ENCODE measurements at regions of chr6 and their contacts with region 1.

Region 1: DNA sequence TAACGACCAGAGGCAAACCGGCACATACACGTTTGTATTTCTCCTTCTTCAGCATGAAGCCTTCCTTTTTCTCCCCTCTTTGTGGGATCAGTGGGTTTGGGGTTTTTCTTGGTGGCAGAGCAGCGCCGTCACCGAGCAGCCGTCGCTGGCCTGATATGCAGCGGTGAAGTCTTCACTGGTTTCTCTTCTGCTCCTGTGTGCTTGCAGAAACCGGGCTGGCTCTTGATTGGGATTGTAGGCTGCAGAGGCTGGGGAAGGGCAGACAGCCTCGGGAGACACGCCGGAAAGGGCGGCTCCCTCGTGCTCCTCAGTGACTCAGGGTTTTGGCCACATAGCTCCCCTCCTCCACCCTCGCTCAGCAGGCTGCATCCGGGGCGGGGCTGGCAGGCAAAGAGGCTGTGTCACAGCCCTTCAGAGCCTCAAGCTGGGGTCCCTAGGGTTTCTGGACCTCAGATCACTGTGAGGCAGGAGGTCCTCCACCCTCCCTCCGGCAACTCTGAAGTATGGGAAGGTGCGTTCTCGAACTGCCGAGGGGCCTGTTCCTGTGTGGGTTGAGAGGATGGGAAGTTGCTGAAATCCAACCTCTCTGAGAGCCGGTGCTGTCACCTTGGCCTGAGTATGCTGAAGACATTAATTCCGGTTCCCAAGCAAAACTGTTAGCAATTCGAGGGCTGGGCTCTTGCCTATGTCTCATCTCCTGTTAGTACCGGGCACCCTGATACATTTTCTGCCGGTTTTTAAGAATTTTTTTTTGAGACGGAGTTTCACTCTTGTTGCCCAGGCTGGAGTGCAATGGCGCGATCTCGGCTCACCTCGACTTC is 24.2 kb downstream of the NQO2 start:
- DNase-seq: peak; percentile 82
- ATAC-seq: peak; percentile 79
- H3K4me3 ChIP-seq: peak overlapping the region; percentile 45 to 88 (median 63)
- H3K4me3 Mint-ChIP-seq: peak overlapping the region; percentile 91
- H3K27ac ChIP-seq: peak overlapping the region; percentile 38 to 50
- H3K27ac Mint-ChIP-seq: peak overlapping the region; percentile 74
- H3K4me1 ChIP-seq: peaks cover 59 to 63% of the 10 kb centered on the region in 2 donors
- H3K4me1 Mint-ChIP-seq: peaks cover 50% of the 10 kb centered on the region
- H3K27me3 ChIP-seq: peaks cover 0 to 4% (median 0%) of the 10 kb centered on the region in 4 experiments
- H3K27me3 Mint-ChIP-seq: peaks cover 5% of the 10 kb centered on the region
- CTCF ChIP-seq: no peak

Region 2: DNA sequence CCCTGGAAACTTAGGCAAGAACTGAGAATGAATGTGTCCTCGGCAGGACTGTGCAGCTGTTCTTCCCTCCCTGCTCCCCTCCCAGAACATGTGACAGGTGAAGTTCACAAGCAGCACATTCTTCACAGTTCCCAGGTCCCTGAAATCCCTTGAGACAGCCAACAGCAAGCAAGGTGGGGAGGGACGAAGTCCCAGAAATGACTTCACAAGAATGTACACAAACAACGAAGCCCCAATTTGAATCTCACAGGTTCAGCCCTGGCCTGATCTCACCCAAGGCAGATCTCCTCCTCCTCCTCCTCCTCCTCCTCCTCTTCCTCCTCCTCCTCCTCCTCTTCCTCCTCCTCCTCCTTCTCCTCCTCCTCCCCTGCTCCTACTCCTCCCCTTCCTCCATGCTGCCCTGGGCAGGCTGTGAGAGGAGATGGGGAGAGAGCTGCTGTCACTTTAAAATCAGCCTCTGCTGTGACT is 226.3 kb before region 1 on chr6:
- CTCF ChIA-PET with region 1: no interaction called
- POLR2A ChIA-PET with region 1: interaction called, 11 read pairs
- intact Hi-C with region 1: no loop called
- DNase-seq: no peak
- ATAC-seq: no peak
- H3K4me3 ChIP-seq: no peak overlapping the region
- H3K4me3 Mint-ChIP-seq: no peak overlapping the region
- H3K27ac ChIP-seq: no peak overlapping the region
- H3K27ac Mint-ChIP-seq: no peak overlapping the region
- H3K4me1 ChIP-seq: peaks cover 15 to 23% of the 10 kb centered on the region in 2 donors
- H3K4me1 Mint-ChIP-seq: peaks cover 25% of the 10 kb centered on the region
- H3K27me3 ChIP-seq: no peaks in the 10 kb centered on the region
- H3K27me3 Mint-ChIP-seq: no peaks in the 10 kb centered on the region
- CTCF ChIP-seq: no peak

Region 3: GRCh38 chr6:2999618-3000557 is 24.0 kb before region 1 on chr6 and contains the start of gene NQO2:
- CTCF ChIA-PET with region 1: interaction called, 63 read pairs
- POLR2A ChIA-PET with region 1: interaction called, 4 read pairs
- intact Hi-C with region 1: loop called (anchors 1 kb)
- DNase-seq: peak; percentile 92
- ATAC-seq: peak; percentile 88
- H3K4me3 ChIP-seq: peak within 1 kb of the TSS; percentile 65 to 91 (median 85)
- H3K4me3 Mint-ChIP-seq: peak within 1 kb of the TSS; percentile 96
- H3K27ac ChIP-seq: peak within 1 kb of the TSS; percentile 65 to 71
- H3K27ac Mint-ChIP-seq: peak within 1 kb of the TSS; percentile 89
- H3K4me1 ChIP-seq: peaks cover 11 to 21% of the 10 kb centered on the region in 2 donors
- H3K4me1 Mint-ChIP-seq: peaks cover 20% of the 10 kb centered on the region
- H3K27me3 ChIP-seq: no peaks in the 10 kb centered on the region
- H3K27me3 Mint-ChIP-seq: no peaks in the 10 kb centered on the region
- CTCF ChIP-seq: no peak
- total RNA-seq, gene NQO2: 17.9 and 21.5 TPM in 2 replicates

Region 4: DNA sequence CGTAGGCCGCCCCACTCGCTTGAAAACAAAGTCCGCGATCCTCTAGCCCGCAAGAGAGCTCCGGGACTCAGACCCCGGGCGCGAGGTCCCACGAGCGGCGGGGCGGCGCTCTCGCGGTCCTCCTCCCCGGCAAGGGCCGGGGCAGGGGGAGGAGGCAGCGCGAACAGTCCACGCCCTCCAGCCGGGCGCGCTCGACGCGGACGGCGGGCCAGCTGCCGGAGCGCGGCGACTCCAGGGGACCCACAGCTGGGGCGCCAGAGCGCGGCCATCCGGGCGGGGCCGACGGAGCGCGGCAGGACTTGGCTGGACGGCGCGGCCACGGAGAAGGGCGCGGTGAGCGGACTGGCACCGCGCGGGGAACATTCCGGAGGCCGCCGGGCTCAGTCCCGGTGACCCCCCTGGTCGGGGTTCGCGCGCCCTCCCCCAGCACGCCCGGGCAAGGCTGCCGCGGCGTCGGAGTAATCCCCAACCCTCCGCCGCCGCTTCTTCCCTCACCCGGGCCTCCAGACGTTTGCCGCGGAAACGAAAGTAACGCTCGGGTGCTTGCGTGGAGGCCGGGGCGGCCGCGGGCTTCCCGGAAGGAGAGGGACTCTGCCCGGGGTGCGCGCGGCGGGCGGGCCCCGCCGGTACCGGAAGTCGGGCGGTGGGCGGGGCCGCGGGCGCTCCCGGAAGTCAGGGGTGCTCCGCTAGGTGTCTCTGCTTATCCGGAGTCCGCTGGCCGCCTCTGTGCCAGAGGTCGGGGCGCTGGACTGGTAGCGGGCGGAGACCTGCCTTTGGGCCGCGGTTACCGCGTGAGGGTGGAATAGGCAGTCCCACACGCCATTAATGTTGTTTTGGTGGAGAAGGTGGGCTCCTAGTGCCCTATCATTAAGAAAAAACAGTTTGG is 44.7 kb after region 1 on chr6 and contains the start of gene RIPK1:
- CTCF ChIA-PET with region 1: interaction called, 11 read pairs
- POLR2A ChIA-PET with region 1: interaction called, 10 read pairs
- intact Hi-C with region 1: loop called (anchors 1 kb)
- DNase-seq: peak; percentile 95
- ATAC-seq: peak; percentile 73
- H3K4me3 ChIP-seq: peak within 1 kb of the TSS; percentile 55 to 87 (median 85)
- H3K4me3 Mint-ChIP-seq: peak within 1 kb of the TSS; percentile 98
- H3K27ac ChIP-seq: peak within 1 kb of the TSS; percentile 92 to 99
- H3K27ac Mint-ChIP-seq: peak within 1 kb of the TSS; percentile 99
- H3K4me1 ChIP-seq: peaks cover 17 to 23% of the 10 kb centered on the region in 2 donors
- H3K4me1 Mint-ChIP-seq: peaks cover 43% of the 10 kb centered on the region
- H3K27me3 ChIP-seq: no peaks in the 10 kb centered on the region
- H3K27me3 Mint-ChIP-seq: no peaks in the 10 kb centered on the region
- CTCF ChIP-seq: no peak
- total RNA-seq, gene RIPK1: 26.2 and 28.1 TPM in 2 replicates

Region 5: DNA sequence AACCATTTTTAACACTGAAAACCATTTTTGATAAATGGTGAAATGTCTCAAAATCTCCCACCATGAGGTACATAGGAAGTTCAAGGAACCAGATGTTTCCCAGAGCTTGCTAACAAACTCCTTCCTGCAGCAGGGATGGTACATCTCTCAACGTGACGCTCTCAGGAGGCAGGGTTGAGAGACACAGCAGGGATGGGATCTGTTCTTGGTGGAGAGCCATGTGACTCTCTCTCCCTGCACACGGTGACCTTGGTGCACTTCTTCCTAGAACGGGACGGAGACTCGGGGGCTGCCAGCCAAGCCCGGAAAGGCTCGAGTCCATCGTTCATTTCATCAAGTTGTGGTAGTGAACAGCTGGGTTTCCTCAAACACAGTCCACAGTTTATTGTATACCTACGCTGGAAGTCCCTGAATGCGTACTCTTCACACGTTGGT is 919.5 kb after region 1 on chr6:
- CTCF ChIA-PET with region 1: no interaction called
- POLR2A ChIA-PET with region 1: no interaction called
- intact Hi-C with region 1: no loop called
- DNase-seq: no peak
- ATAC-seq: no peak
- H3K4me3 ChIP-seq: no peak overlapping the region
- H3K4me3 Mint-ChIP-seq: no peak overlapping the region
- H3K27ac ChIP-seq: no peak overlapping the region
- H3K27ac Mint-ChIP-seq: no peak overlapping the region
- H3K4me1 ChIP-seq: no peaks in the 10 kb centered on the region
- H3K4me1 Mint-ChIP-seq: no peaks in the 10 kb centered on the region
- H3K27me3 ChIP-seq: peaks cover 0 to 9% (median 0%) of the 10 kb centered on the region in 4 experiments
- H3K27me3 Mint-ChIP-seq: peaks cover 41% of the 10 kb centered on the region
- CTCF ChIP-seq: no peak

Measured in B cell (primary cell).